Vagina (tissue), 2 donors: ENCODE measurements at regions of chr13 and their contacts with region 1.

Region 1: DNA sequence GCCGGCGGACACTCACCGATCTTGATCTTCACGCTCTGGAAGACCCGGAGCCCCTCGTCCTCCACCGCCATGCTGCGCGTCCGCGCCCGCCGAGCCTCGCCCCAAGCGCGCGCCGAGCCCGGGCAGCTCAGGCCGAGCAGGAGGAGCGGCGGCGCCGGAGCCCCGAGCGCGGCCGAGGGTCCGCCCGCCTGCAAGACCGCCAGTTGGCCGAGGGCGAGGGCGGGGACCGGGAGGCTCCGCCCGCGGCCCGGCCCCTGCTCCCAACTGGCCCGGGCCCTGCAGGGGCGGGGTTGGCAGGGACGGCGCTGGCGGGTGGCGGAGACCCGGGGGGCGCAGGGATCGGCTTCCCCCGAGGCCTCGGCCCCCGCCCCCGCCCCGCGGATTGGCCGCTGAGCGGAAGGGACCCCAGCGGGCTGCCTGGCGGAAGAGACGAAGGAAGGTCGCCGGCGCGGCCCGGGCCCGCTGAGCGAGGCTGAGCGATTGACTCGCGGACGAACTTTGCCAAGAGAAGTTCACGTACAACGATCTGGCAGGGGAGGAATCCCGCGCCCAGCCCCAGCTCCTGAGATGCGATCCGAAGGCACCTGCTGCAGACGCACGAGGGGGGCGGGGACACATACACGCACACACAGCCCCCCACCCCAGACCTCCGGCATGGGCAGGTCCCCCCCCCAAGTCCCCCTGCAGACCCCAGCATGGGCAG is at the start of gene RASA3:
- DNase-seq: no peak
- H3K4me3 ChIP-seq: peak within 1 kb of the TSS; percentile 70 to 81
- H3K27ac ChIP-seq: peak within 1 kb of the TSS; percentile 90
- H3K4me1 ChIP-seq: peaks cover 42% of the 10 kb centered on the region
- H3K27me3 ChIP-seq: no peaks in the 10 kb centered on the region
- CTCF ChIP-seq: no peak
- POLR2A ChIP-seq: peak in 1 of 2 donors; percentile 79
- total RNA-seq, gene RASA3: 19.6 TPM

Region 2: DNA sequence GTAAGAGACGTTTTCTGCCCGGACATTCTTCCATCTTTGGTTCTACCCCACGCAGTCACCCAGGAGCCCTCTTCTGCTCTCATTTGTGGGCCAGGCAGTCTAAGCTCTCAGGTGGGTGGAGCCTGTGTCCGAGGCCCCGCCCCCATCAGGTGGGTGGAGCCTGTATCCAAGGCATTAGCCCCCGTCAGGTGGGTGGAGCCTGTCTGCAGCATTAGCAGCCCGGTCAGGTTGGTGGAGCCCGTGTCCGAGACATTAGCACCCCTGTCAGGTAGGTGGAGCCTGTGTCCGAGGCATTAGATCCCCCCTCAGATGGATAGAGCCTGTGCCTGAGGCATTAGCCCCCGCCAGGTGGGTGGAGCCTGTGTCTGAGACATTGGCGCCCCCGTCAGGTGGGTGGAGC is 113.2 kb before region 1 on chr13:
- intact Hi-C with region 1: loop called (anchors 5 kb)
- DNase-seq: no peak
- H3K4me3 ChIP-seq: no peak overlapping the region
- H3K27ac ChIP-seq: no peak overlapping the region
- H3K4me1 ChIP-seq: peaks cover 7% of the 10 kb centered on the region
- H3K27me3 ChIP-seq: no peaks in the 10 kb centered on the region
- CTCF ChIP-seq: no peak
- POLR2A ChIP-seq: no peak

Region 3: DNA sequence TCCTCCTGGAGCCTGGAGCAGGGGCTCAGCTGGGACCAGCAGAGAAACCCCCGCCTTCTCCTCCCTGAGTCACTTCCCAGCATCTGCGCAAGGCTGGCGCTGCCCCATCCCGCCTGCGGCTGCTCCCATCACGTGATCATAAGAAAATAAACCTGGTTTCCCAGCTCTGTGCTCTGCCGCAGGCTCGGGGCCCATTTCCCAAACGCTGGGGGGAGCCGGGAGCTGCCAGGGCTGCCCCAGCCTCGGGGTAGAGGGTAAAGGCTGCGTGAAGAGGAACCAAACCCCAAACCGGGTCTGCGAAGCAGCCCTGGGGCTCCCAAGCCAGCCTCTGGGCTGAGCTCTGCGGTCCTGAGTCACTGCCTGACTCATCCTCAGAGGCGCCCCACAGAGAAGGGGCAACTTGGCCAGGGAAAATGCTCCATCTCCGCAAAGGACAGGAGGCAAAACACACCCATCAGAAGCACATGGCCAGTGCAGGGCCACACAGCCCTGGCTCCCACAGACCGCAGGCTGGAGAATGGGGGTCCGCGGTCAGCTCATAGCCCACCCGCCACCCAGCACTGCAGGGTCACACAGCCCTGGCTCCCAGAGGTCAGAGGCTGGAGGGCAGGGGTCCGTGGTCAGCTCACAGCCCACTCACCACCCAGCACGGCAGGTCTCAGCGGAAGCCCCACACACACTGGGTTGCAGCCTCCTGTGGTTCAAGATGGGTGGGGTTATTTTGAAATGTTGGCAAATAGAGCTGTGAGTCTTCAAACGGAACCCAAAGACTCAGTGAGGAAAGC is 67.2 kb before region 1 on chr13:
- intact Hi-C with region 1: loop called (anchors 10 kb)
- DNase-seq: peak in 1 of 2 donors; percentile 97
- H3K4me3 ChIP-seq: peak overlapping the region; percentile 36 to 42
- H3K27ac ChIP-seq: peak overlapping the region; percentile 97
- H3K4me1 ChIP-seq: peaks cover 82% of the 10 kb centered on the region
- H3K27me3 ChIP-seq: no peaks in the 10 kb centered on the region
- CTCF ChIP-seq: no peak
- POLR2A ChIP-seq: no peak

Region 4: GRCh38 chr13:114296902-114297301 is 164.3 kb after region 1 on chr13:
- intact Hi-C with region 1: no loop called
- DNase-seq: no peak
- H3K4me3 ChIP-seq: no peak overlapping the region
- H3K27ac ChIP-seq: no peak overlapping the region
- H3K4me1 ChIP-seq: no peaks in the 10 kb centered on the region
- H3K27me3 ChIP-seq: no peaks in the 10 kb centered on the region
- CTCF ChIP-seq: no peak
- POLR2A ChIP-seq: no peak